ENCODE measurements at regions of chr22 and their contacts with region 1.

Region 1: DNA sequence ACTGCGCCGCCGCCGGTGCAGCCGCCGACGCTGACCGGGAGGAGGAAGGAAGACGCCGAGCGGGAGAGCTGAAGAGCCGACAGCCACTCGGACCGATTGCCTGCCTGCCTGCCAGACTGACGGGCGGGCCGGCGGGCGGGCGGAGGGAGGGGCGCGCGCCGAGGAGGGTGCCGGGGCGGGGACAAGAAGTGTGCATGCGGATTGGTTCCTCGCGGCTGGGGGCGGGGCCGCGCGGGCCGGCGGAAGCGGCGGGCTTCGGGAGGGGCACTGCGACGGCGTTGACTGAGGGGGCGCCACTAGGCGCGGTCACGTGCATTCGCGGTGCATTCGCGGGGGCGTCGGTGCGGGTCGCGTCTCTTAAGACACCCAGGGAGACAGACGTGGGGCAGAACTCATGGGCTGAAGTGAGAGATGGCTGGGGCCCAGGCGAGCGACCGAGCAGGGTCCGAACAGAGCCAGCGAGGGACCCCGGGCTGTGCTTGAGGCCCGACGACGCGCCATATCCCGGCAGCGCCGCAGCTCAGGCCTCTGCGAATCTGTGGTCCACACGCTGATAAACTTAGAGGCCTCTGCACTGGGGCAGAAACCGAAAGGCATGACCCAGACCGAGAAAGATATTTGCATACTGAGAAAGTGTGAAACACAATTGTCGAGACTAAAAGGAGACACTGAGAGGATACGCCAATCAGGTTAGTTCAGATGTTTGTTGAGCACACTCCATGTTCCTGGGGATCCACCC is at the start of gene MAPK1:
- DNase-seq: peak; percentile 92 to 95
- ATAC-seq: peak; percentile 99 to 100 (median 99)
- H3K4me3 ChIP-seq: peak within 1 kb of the TSS; percentile 79 to 97 (median 90)
- H3K27ac ChIP-seq: peak within 1 kb of the TSS; percentile 78 to 96 (median 88)
- H3K4me1 ChIP-seq: peaks cover 5 to 51% (median 42%) of the 10 kb centered on the region in 9 donors
- H3K27me3 ChIP-seq: no peaks in the 10 kb centered on the region
- CTCF ChIP-seq: peak in 8 of 9 donors; percentile 21 to 63 (median 44)
- total RNA-seq, gene MAPK1: 85.4 to 124 (median 105) TPM

Region 2: GRCh38 chr22:21712894-21713712 is 154.6 kb before region 1 on chr22:
- intact Hi-C with region 1: loop called in 1 of 10 experiments (anchors 5 kb)
- DNase-seq: peak; percentile 44 to 70
- ATAC-seq: peak; percentile 86 to 96 (median 92)
- H3K4me3 ChIP-seq: peak overlapping the region in 5 of 10 donors; percentile 4 to 28 (median 13)
- H3K27ac ChIP-seq: peak overlapping the region in 2 of 10 donors; percentile 28 to 41
- H3K4me1 ChIP-seq: peaks cover 0 to 19% (median 9%) of the 10 kb centered on the region in 9 donors
- H3K27me3 ChIP-seq: no peaks in the 10 kb centered on the region
- CTCF ChIP-seq: peak; percentile 46 to 89 (median 77)

Region 3: GRCh38 chr22:21735200-21736076 is 132.3 kb before region 1 on chr22 and contains the start of gene YPEL1:
- intact Hi-C with region 1: loop called in 3 of 10 experiments (anchors 5 kb)
- DNase-seq: peak; percentile 95 to 98
- ATAC-seq: peak; percentile 97 to 99 (median 98)
- H3K4me3 ChIP-seq: peak within 1 kb of the TSS; percentile 29 to 80 (median 65)
- H3K27ac ChIP-seq: peak within 1 kb of the TSS in 9 of 10 donors; percentile 64 to 86 (median 78)
- H3K4me1 ChIP-seq: peaks cover 5 to 20% (median 13%) of the 10 kb centered on the region in 9 donors
- H3K27me3 ChIP-seq: no peaks in the 10 kb centered on the region
- CTCF ChIP-seq: no peak
- total RNA-seq, gene YPEL1: 1.5 to 14.6 (median 8.0) TPM

Region 4: GRCh38 chr22:21754523-21754922 is 113.2 kb before region 1 on chr22:
- intact Hi-C with region 1: no loop called
- DNase-seq: peak in 1 of 2 donors; percentile 34
- ATAC-seq: peak; percentile 25 to 47 (median 36)
- H3K4me3 ChIP-seq: peak overlapping the region in 2 of 10 donors; percentile 2 to 11
- H3K27ac ChIP-seq: peak overlapping the region in 1 of 10 donors; percentile 1
- H3K4me1 ChIP-seq: peaks cover 0 to 27% (median 12%) of the 10 kb centered on the region in 9 donors
- H3K27me3 ChIP-seq: no peaks in the 10 kb centered on the region
- CTCF ChIP-seq: no peak

Region 5: GRCh38 chr22:21791635-21792625 is 75.8 kb before region 1 on chr22:
- intact Hi-C with region 1: loop called in 2 of 10 experiments (anchors 5 to 10 kb)
- DNase-seq: no peak
- ATAC-seq: no peak
- H3K4me3 ChIP-seq: no peak overlapping the region
- H3K27ac ChIP-seq: no peak overlapping the region
- H3K4me1 ChIP-seq: peaks cover 0 to 13% (median under 1%) of the 10 kb centered on the region in 9 donors
- H3K27me3 ChIP-seq: no peaks in the 10 kb centered on the region
- CTCF ChIP-seq: no peak

Region 6: DNA sequence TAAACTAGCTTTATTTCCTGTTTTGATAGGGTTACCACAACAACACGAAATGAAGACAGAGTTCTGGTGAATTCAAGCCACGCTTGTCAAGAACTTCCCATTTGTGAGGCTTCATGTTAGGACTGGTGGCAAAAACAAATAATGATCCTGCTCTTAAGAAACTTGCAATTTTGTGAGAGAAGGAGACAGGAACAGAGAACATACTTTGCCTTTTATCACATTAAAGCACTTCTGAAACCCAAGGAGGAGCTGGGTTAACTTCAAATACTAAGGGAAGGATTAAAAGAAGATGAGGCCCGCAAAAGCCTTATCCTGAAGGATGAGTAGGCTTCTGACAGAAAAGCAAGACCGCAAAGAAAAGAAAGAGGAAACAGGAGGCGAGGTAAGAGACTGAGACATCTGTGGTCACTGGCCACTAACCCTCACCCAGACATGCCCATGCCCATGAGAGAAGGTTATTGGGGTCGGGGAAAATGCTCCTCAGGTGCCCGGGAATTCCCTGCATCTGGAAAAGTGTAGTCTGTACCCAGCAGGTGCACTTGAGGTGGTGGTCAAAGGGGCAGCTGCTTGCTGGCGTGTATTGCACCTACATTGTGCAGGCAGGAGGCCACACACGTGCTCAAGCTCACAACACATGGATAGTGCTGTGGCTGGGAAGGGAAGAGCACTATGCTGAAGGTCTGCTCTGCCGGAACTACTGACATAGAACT is 50.8 kb before region 1 on chr22:
- intact Hi-C with region 1: loop called in 4 of 10 experiments (anchors 5 to 10 kb)
- DNase-seq: peak in 1 of 2 donors; percentile 51
- ATAC-seq: peak; percentile 67 to 93 (median 88)
- H3K4me3 ChIP-seq: peak overlapping the region in 4 of 10 donors; percentile 8 to 23 (median 20)
- H3K27ac ChIP-seq: peak overlapping the region; percentile 2 to 84 (median 70)
- H3K4me1 ChIP-seq: peaks cover 9 to 63% (median 47%) of the 10 kb centered on the region in 9 donors
- H3K27me3 ChIP-seq: no peaks in the 10 kb centered on the region
- CTCF ChIP-seq: no peak

Region 7: DNA sequence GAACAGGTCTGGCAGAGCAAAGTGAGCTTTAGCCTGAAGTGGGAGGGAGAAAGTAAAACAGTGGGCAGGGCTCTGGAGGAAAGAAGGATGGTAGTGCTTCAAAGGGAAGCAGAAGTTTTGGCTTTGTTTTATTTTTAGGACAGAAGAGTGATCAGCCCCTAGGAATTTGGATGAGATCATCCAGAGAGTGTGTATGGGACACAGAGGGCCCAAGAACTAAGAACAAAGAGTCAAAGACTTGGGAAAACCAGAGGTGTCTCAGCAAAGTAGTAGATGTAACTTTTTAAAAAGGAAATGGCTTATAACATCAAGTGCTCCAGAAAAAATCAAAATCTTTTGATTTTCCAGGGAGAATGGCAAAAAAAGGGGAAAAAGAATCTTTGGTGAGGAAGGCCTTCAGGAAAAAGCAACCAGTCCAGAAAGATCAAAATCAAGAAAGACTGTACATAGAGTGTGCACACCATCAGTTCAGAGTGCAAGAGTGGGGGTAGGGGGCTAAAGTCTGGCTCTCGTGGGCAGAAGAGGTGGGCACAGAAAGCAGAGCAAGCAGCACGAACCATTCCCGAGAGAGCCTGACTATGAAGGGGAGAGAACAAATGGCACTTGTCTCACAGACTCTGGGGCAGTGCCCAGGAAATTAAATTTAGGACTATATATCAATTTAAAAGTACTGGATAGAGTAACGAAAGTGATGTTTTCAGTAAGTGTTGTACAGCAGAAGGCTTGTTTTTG is 30.3 kb before region 1 on chr22:
- intact Hi-C with region 1: loop called in 1 of 10 experiments (anchors 5 kb)
- DNase-seq: peak in 1 of 2 donors; percentile 42
- ATAC-seq: peak; percentile 88 to 97 (median 93)
- H3K4me3 ChIP-seq: peak overlapping the region in 1 of 10 donors; percentile 8
- H3K27ac ChIP-seq: peak overlapping the region; percentile 73 to 91 (median 85)
- H3K4me1 ChIP-seq: peaks cover 5 to 72% (median 57%) of the 10 kb centered on the region in 9 donors
- H3K27me3 ChIP-seq: no peaks in the 10 kb centered on the region
- CTCF ChIP-seq: no peak

Region 8: DNA sequence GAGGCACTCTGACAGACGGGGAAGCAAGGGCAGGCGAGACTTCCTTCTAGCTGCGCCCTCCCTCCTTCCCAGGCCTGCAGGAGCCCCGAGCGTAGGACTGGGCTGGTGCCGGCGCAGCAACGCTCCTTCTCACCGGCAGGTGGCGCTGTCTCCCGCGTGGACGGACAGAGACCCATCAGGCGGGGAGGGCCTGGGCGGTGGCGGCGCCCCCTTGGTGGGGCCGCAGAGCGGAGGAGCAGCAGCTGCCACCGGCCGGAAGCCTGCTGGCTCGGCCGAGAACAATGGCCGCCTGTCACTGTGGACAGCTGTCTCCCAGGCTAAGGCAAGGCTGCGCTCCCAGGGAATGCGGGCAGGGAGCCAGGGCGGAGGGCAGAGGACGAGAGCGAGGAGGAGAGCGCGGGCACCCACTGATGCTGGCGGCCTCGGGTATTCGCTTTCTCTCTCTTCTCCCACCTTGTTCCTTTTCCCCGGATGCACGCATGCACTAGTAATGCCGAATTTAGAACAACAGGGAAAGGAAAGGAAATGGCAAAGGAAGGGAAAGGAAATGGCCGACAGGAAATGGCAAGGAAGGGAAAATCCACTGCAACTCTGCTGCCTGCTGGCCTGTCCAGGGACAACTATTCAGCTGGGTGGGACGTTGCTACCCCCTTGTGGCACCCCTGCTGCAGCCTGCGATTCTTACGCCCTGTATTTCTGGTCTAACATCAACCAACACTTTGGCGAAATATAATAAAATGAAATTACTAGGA is 70.5 kb after region 1 on chr22:
- intact Hi-C with region 1: loop called in 4 of 10 experiments (anchors 5 to 10 kb)
- DNase-seq: peak; percentile 93 to 97
- ATAC-seq: peak; percentile 85 to 96 (median 90)
- H3K4me3 ChIP-seq: peak overlapping the region; percentile 22 to 67 (median 59)
- H3K27ac ChIP-seq: peak overlapping the region; percentile 90 to 98 (median 96)
- H3K4me1 ChIP-seq: peaks cover 35 to 85% (median 78%) of the 10 kb centered on the region in 9 donors
- H3K27me3 ChIP-seq: no peaks in the 10 kb centered on the region
- CTCF ChIP-seq: peak; percentile 90 to 99 (median 97)

Measured in heart right ventricle (tissue), 16 donors.